ENCODE measurements at regions of chr3 and their contacts with region 1.

Region 1: DNA sequence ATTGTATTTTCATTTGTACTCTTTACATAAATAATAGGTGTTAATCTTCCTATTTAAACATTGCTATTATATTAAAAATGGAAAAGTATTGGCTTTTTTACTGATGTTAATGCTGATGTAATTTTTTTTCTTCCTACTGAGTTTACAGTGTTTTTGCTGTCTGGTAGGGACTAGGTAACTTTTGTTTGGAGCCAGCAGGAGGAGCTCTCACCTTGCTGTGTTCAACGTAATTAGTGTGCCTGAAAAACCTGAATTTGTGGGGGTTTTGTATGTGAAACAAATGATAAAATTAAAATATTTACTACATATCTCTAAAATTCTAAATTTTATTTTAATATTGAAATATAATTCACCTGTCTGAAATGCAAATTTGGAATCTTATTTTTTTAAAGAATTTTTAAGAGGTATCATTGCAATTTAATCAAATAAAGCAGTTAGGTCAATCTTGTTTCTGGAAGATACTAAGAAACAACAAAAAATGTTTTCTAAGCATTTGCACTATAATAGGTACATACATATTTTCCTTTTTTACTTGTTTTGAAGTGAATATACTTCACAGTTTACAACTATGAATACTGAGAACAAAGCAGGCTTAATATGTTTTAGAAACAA is 48.8 kb downstream of the EPHA6 start:
- DNase-seq: peak in 3 of 4 experiments; percentile 1 to 6 (median 4)
- ATAC-seq: no peak
- H3K4me3 ChIP-seq: no peak overlapping the region
- H3K27ac ChIP-seq: no peak overlapping the region
- H3K4me1 ChIP-seq: no peaks in the 10 kb centered on the region
- H3K27me3 ChIP-seq: no peaks in the 10 kb centered on the region
- CTCF ChIP-seq: peak in 2 of 3 experiments; percentile 33 to 36; a peak in 2 of 6 replicates
- EP300 ChIP-seq: no peak
- POLR2A ChIP-seq: no peak
- RAD21 ChIP-seq: peak; percentile 22 to 36; a peak in 3 of 4 replicates

Region 2: GRCh38 chr3:96700322-96701315 is 162.6 kb before region 1 on chr3:
- CTCF ChIA-PET with region 1: no interaction called
- POLR2A ChIA-PET with region 1: no interaction called
- in situ Hi-C with region 1: no loop called
- intact Hi-C with region 1: no loop called
- DNase-seq: no peak
- ATAC-seq: no peak
- H3K4me3 ChIP-seq: no peak overlapping the region
- H3K27ac ChIP-seq: no peak overlapping the region
- H3K4me1 ChIP-seq: no peaks in the 10 kb centered on the region
- H3K27me3 ChIP-seq: no peaks in the 10 kb centered on the region
- CTCF ChIP-seq: no peak
- EP300 ChIP-seq: no peak
- POLR2A ChIP-seq: no peak
- RAD21 ChIP-seq: no peak

Region 3: GRCh38 chr3:96813134-96813819 is 50.0 kb before region 1 on chr3:
- CTCF ChIA-PET with region 1: no interaction called
- POLR2A ChIA-PET with region 1: no interaction called
- in situ Hi-C with region 1: no loop called
- intact Hi-C with region 1: no loop called
- DNase-seq: peak in 1 of 4 experiments; percentile 0
- ATAC-seq: no peak
- H3K4me3 ChIP-seq: no peak overlapping the region
- H3K27ac ChIP-seq: no peak overlapping the region
- H3K4me1 ChIP-seq: no peaks in the 10 kb centered on the region
- H3K27me3 ChIP-seq: no peaks in the 10 kb centered on the region
- CTCF ChIP-seq: no peak
- EP300 ChIP-seq: no peak
- POLR2A ChIP-seq: no peak
- RAD21 ChIP-seq: no peak

Region 4: GRCh38 chr3:97658668-97659285 is 795.5 kb after region 1 on chr3:
- CTCF ChIA-PET with region 1: no interaction called
- POLR2A ChIA-PET with region 1: no interaction called
- in situ Hi-C with region 1: no loop called
- intact Hi-C with region 1: loop called (anchors 10 kb)
- DNase-seq: peak; percentile 3 to 7 (median 4)
- ATAC-seq: no peak
- H3K4me3 ChIP-seq: no peak overlapping the region
- H3K27ac ChIP-seq: no peak overlapping the region
- H3K4me1 ChIP-seq: no peaks in the 10 kb centered on the region
- H3K27me3 ChIP-seq: no peaks in the 10 kb centered on the region
- CTCF ChIP-seq: peak in 2 of 3 experiments; percentile 29 to 30; a peak in 3 of 6 replicates
- EP300 ChIP-seq: no peak
- POLR2A ChIP-seq: no peak
- RAD21 ChIP-seq: peak in 1 of 2 experiments; percentile 56; a peak in 3 of 4 replicates

Region 5: DNA sequence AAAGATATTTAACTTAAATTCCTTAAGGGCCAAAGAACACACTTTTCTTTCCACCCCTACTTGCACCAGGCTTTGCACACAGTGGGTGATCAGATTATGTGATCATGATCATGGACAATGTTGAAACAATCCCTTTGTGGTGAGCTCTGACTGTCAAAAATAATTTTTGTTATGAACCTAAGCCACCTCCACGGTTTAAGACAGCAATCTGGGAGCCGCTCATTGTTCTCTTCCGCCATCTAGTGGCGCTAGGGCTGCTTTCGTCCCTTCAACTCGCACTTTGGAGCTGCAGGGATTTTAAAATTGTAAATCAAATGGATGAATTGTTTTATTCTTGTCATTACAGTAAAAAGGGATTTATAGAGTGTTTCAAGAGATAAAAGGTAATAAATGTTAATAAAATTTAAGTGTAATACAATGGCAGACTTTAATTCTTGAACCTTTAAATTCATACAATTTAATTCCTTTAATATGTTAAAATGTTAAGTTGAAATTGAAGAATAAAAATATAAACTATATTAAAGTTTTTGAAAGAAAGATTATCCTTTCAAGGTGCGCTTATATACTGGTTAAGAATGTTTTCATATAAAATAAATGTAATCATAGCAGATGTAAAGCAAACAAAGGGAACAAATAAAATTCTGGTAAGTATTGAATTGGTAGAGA is 856.1 kb after region 1 on chr3:
- CTCF ChIA-PET with region 1: interaction called, 3 read pairs
- POLR2A ChIA-PET with region 1: no interaction called
- in situ Hi-C with region 1: no loop called
- intact Hi-C with region 1: loop called (anchors 10 kb)
- DNase-seq: peak; percentile 30 to 66 (median 32)
- ATAC-seq: peak; percentile 81
- H3K4me3 ChIP-seq: no peak overlapping the region
- H3K27ac ChIP-seq: no peak overlapping the region
- H3K4me1 ChIP-seq: no peaks in the 10 kb centered on the region
- H3K27me3 ChIP-seq: no peaks in the 10 kb centered on the region
- CTCF ChIP-seq: peak; percentile 59 to 71 (median 67)
- EP300 ChIP-seq: no peak
- POLR2A ChIP-seq: no peak
- RAD21 ChIP-seq: peak; percentile 49 to 62